ENCODE measurements at regions of chr19 and their contacts with region 1.

Region 1: GRCh38 chr19:49106648-49107135 is 7.5 kb upstream of the LIN7B start:
- DNase-seq: peak; percentile 42 to 78 (median 70)
- ATAC-seq: peak; percentile 83
- H3K4me3 ChIP-seq: no peak overlapping the region
- H3K4me3 Mint-ChIP-seq: no peak overlapping the region
- H3K27ac ChIP-seq: no peak overlapping the region
- H3K27ac Mint-ChIP-seq: no peak overlapping the region
- H3K4me1 ChIP-seq: no peaks in the 10 kb centered on the region
- H3K4me1 Mint-ChIP-seq: peaks cover 5% of the 10 kb centered on the region
- H3K27me3 ChIP-seq: no peaks in the 10 kb centered on the region
- H3K27me3 Mint-ChIP-seq: no peaks in the 10 kb centered on the region
- CTCF ChIP-seq: peak; percentile 80

Region 2: DNA sequence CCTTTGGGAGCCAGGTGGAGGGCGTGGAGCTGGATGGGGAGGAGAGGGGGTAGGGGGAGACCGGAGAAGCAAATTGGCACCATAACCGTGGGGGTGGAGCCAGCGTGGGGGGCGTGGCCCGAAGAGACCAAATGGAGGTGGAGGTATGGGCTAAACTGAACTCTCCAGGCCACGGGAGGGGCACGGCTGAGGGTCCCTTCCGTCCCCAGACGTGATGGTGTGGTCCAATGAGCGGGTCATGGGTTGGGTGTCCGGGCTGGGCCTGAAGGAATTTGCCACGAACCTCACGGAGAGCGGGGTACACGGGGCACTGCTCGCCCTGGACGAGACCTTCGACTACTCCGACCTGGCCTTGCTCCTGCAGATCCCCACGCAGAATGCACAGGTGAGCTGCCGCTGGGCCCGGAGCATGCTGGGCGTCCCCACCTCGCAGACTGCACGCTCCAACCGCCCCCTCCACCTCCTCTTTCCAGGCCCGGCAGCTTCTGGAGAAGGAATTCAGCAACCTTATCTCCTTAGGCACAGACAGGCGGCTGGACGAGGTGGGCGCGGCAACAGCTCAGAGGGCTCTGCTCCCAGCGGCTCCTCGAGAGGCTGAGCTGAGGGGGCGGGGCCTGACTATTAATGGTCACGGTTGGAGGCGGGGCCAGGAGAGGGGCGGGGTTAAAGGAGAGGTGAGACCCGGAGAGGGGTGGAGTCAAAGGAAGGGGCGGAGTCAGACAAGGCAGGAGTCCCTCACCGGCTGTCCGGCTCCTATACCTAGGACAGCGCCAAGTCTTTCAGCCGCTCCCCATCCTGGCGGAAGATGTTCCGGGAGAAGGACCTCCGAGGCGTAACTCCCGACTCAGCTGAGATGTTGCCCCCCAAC is 42.3 kb after region 1 on chr19:
- CTCF ChIA-PET with region 1: interaction called, 16 read pairs
- POLR2A ChIA-PET with region 1: no interaction called
- intact Hi-C with region 1: loop called in 1 of 2 experiments (anchors 5 kb)
- DNase-seq: peak; percentile 53 to 86 (median 77)
- ATAC-seq: peak; percentile 61
- H3K4me3 ChIP-seq: peak overlapping the region; percentile 60 to 64
- H3K4me3 Mint-ChIP-seq: peak overlapping the region; percentile 78
- H3K27ac ChIP-seq: no peak overlapping the region
- H3K27ac Mint-ChIP-seq: no peak overlapping the region
- H3K4me1 ChIP-seq: peaks cover 47% of the 10 kb centered on the region
- H3K4me1 Mint-ChIP-seq: peaks cover 34% of the 10 kb centered on the region
- H3K27me3 ChIP-seq: peaks cover 36 to 39% of the 10 kb centered on the region in 2 experiments
- H3K27me3 Mint-ChIP-seq: peaks cover 65% of the 10 kb centered on the region
- CTCF ChIP-seq: no peak

Measured in CD8-positive, alpha-beta T cell (primary cell).